ENCODE measurements at regions of chr6 and their contacts with region 1.

Region 1: DNA sequence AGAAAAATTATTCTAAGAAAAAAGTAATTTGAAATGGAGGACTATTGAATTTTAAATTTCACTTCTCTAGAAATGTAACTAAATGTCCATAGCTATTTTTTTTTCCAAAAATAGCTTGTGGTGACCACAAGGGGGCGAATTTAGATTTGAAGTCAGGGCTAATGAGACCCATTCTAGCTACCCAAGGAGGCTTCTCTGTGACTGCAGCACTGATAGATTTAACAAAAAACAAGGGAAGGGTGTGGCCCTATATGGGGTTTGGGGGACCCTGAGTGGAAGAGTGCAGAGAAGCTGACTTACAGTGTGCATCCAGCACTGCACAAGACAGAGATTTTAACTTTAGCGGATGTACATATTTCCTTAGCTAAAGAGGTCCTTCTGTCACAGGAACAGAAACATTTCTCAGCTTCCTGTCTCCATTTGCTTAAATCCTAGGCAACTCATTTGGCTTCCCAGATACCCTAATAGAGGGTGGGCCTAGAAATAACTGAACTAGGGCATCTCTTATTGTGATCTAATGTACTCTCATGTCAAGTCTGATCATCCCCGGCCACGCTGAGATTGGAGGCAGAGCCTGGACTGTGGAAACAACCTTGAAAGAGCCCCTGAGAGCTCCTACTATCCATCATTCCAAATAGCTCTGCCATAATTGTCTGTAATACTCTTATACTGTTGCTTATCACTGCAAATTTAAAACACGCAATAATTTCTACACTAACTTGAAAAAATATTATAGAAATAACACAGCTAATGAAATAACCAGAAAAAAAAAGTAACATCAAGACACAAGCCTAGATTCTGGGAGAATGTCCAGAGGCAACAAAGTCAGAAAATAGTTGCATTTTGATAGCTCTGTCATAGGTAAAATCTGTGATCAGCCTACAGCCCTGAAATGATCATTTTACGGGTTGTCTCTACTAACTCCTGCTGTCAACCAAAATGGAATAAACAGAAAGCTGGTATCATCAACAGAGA is 93.6 kb downstream of the SNAP91 start:
- DNase-seq: peak; percentile 15 to 36
- ATAC-seq: peak; percentile 47 to 72; a peak in 4 of 6 replicates
- H3K4me3 ChIP-seq: no peak overlapping the region
- H3K27ac ChIP-seq: no peak overlapping the region
- H3K4me1 ChIP-seq: no peaks in the 10 kb centered on the region
- CTCF ChIP-seq: peak; percentile 58
- EP300 ChIP-seq: no peak
- POLR2A ChIP-seq: no peak
- RAD21 ChIP-seq: peak; percentile 47 to 52; a peak in 4 of 5 replicates

Region 2: GRCh38 chr6:83341765-83342164 is 273.5 kb before region 1 on chr6:
- CTCF ChIA-PET with region 1: no interaction called
- POLR2A ChIA-PET with region 1: no interaction called
- DNase-seq: peak in 1 of 2 experiments; percentile 13
- ATAC-seq: no peak
- H3K4me3 ChIP-seq: no peak overlapping the region
- H3K27ac ChIP-seq: no peak overlapping the region
- H3K4me1 ChIP-seq: no peaks in the 10 kb centered on the region
- CTCF ChIP-seq: no peak
- EP300 ChIP-seq: no peak
- POLR2A ChIP-seq: no peak
- RAD21 ChIP-seq: no peak

Region 3: DNA sequence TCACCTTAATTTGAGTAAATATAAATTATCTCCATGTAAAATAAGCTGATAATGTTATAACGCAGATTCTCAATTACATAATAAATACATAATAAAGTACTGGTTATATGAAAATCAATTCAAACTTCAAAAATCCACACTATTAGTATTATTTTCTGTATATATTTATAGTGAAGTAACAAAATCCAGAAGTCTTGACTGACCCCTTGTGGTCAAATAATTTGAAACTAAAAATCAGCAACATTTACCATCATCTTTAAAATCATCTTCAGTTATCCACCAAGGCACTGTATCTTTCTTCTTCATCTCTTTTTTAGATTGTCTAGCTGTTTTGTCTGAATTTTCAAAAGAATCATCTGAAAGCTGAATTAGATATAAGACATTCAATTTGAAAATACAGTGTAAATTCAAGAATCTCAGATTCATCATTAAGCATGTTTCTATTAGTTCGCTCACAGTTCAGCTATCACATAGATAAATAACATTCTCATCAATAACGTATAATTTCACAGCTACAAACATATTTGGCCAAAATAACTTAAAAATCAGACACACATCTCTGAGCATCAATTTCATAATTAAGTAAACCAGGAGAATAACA is 605.6 kb after region 1 on chr6:
- CTCF ChIA-PET with region 1: interaction called, 17 read pairs
- POLR2A ChIA-PET with region 1: no interaction called
- DNase-seq: peak in 1 of 2 experiments; percentile 20
- ATAC-seq: no peak
- H3K4me3 ChIP-seq: no peak overlapping the region
- H3K27ac ChIP-seq: no peak overlapping the region
- H3K4me1 ChIP-seq: no peaks in the 10 kb centered on the region
- CTCF ChIP-seq: peak; percentile 59
- EP300 ChIP-seq: no peak
- POLR2A ChIP-seq: no peak
- RAD21 ChIP-seq: peak; percentile 60 to 67

Region 4: DNA sequence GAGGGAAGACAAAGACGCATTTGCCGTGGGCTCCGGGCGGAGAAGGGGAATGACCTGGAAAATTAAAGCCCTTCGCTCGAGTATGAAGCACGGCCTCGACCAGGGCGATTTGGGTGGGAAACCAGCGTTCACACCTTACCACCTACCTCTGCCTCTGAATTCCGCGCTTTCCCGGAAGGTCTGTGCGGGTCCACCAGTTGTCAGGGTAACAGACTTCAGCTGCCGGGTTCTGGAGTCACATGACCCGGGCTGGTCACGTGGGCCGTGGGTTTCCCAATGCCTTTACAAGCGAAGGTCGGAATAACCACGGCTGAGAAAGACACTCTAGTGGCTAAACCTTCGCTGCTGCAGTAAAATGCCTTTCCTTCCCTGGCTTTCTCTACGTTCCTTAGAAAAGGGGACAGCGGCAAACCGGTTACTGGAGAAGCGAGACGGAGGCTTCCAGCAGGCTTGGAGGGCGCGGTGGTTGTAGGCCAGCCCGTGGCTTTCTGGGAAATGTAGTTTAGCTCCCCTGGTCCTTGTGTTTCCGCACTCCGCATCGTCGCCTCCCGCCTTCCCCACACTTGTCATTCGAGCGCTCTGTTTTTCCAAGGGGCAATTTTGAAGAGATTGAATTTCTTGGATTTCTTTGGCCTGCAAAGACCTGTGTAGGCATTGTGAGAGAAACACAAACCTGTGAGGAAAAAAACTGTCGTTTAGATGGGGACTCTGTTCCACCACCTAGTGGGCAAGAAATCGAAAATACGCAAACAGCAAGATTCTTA is 612.3 kb after region 1 on chr6 and contains the start of gene CEP162:
- CTCF ChIA-PET with region 1: interaction called, 17 read pairs
- POLR2A ChIA-PET with region 1: no interaction called
- DNase-seq: peak; percentile 55 to 81
- ATAC-seq: peak; percentile 99
- H3K4me3 ChIP-seq: peak within 1 kb of the TSS; percentile 96
- H3K27ac ChIP-seq: peak within 1 kb of the TSS; percentile 87 to 96
- H3K4me1 ChIP-seq: 0 out of 3 replicates have a peak, but pooled peaks cover 6% of the 10 kb centered on the region
- CTCF ChIP-seq: peak; percentile 58
- EP300 ChIP-seq: no peak
- POLR2A ChIP-seq: no peak
- RAD21 ChIP-seq: peak in 1 of 2 experiments; percentile 14; a peak in 1 of 5 replicates
- polyA plus RNA-seq, gene CEP162: 2.3 TPM in 2 replicates